ENCODE measurements at regions of chr1 and their contacts with region 1.

Region 1: DNA sequence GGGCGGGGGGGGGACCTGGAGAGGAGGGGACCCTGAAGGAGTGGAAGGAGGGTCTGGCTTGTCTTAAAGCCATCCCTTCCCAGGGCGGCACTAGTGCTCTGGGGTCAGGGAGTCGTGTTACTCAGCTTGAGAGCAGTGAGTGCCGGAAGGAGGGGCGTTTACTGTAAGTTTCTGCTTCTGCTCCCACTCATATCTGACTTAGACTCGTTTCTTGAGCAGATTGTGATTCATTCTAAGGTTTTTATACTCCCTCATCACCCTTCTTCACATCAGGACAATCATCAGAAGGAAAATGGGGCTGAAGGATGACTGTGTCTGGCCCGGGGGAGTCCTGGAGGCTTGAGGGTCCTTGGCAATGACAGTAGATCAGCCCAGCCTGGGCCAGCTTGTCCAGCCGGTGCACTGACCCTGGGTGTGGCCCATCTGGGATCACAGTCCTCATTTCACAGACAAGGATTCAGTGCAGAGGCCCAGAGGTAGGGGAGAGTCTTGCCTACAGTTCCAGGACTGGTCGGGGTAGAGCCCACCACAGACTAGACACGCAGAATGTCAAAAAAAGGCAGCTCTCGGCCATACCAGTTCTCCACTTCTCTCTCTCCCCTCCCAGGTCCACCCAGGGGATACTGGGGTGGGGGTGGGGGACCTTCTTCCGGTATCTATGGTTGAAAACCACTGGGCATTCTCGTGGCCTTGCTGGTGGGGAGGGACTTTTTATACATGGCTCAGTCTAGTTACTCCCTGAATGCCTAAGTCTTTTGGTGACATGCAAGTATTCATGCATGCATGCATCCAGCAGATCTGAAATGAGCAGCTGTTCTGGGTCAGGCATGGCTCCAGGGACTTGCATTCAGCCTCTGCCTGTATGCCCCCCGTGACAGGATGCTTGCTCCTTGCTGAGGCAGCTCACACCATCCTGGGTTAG is 5.1 kb downstream of the TNFRSF8 start:
- DNase-seq: peak; percentile 77
- ATAC-seq: peak; percentile 78
- H3K4me3 Mint-ChIP-seq: no peak overlapping the region
- H3K27ac Mint-ChIP-seq: peak overlapping the region; percentile 80
- H3K4me1 Mint-ChIP-seq: peaks cover 47% of the 10 kb centered on the region
- H3K27me3 Mint-ChIP-seq: peaks cover 54% of the 10 kb centered on the region
- CTCF ChIP-seq: no peak

Region 2: GRCh38 chr1:12052008-12052573 is 16.1 kb before region 1 on chr1:
- CTCF ChIA-PET with region 1: interaction called, 12 read pairs
- POLR2A ChIA-PET with region 1: interaction called, 11 read pairs
- intact Hi-C with region 1: no loop called
- DNase-seq: peak; percentile 62
- ATAC-seq: peak; percentile 46
- H3K4me3 Mint-ChIP-seq: no peak overlapping the region
- H3K27ac Mint-ChIP-seq: no peak overlapping the region
- H3K4me1 Mint-ChIP-seq: peaks cover 37% of the 10 kb centered on the region
- H3K27me3 Mint-ChIP-seq: peaks cover 9% of the 10 kb centered on the region
- CTCF ChIP-seq: no peak

Region 3: GRCh38 chr1:12078938-12079861 is 11.0 kb after region 1 on chr1:
- CTCF ChIA-PET with region 1: interaction called, 20 read pairs
- POLR2A ChIA-PET with region 1: interaction called, 3 read pairs
- intact Hi-C with region 1: no loop called
- DNase-seq: peak; percentile 75
- ATAC-seq: peak; percentile 79
- H3K4me3 Mint-ChIP-seq: no peak overlapping the region
- H3K27ac Mint-ChIP-seq: peak overlapping the region; percentile 20
- H3K4me1 Mint-ChIP-seq: peaks cover 22% of the 10 kb centered on the region
- H3K27me3 Mint-ChIP-seq: peaks cover 2% of the 10 kb centered on the region
- CTCF ChIP-seq: peak; percentile 75

Measured in activated CD8-positive, alpha-beta T cell treated with anti-CD3 and anti-CD28 coated beads for 36 hours (primary cell).